CD14-positive monocyte (primary cell): ENCODE measurements at regions of chr6 and their contacts with region 1.

Region 1: GRCh38 chr6:27809939-27810767 is 102.0 kb downstream of the OR2B2 start:
- DNase-seq: peak; percentile 87 to 96 (median 91)
- H3K4me3 ChIP-seq: peak overlapping the region; percentile 62 to 87 (median 70)
- H3K4me3 Mint-ChIP-seq: peak overlapping the region; percentile 89 to 92
- H3K27ac ChIP-seq: peak overlapping the region; percentile 80 to 92
- H3K27ac Mint-ChIP-seq: peak overlapping the region; percentile 88 to 97 (median 94)
- H3K4me1 ChIP-seq: peaks cover 41 to 48% of the 10 kb centered on the region in 2 donors
- H3K4me1 Mint-ChIP-seq: peaks cover 49% of the 10 kb centered on the region
- H3K27me3 ChIP-seq: no peaks in the 10 kb centered on the region
- H3K27me3 Mint-ChIP-seq: peaks cover 0 to 4% (median 0%) of the 10 kb centered on the region in 3 donors
- CTCF ChIP-seq: no peak

Region 2: GRCh38 chr6:27772261-27773001 is 37.7 kb before region 1 on chr6:
- intact Hi-C with region 1: no loop called
- DNase-seq: peak; percentile 71 to 80 (median 79)
- H3K4me3 ChIP-seq: no peak overlapping the region
- H3K4me3 Mint-ChIP-seq: peak overlapping the region in 1 of 2 donors; percentile 39
- H3K27ac ChIP-seq: no peak overlapping the region
- H3K27ac Mint-ChIP-seq: peak overlapping the region in 5 of 7 donors; percentile 46 to 87 (median 76)
- H3K4me1 ChIP-seq: peaks cover 32 to 33% of the 10 kb centered on the region in 2 donors
- H3K4me1 Mint-ChIP-seq: peaks cover 35% of the 10 kb centered on the region
- H3K27me3 ChIP-seq: no peaks in the 10 kb centered on the region
- H3K27me3 Mint-ChIP-seq: peaks cover 0 to 2% (median 0%) of the 10 kb centered on the region in 3 donors
- CTCF ChIP-seq: peak; percentile 93

Region 3: GRCh38 chr6:27871924-27872638 is 61.9 kb after region 1 on chr6:
- intact Hi-C with region 1: loop called in 1 of 2 experiments (anchors 5 kb)
- DNase-seq: peak; percentile 93 to 94 (median 94)
- H3K4me3 ChIP-seq: peak overlapping the region; percentile 86 to 98 (median 95)
- H3K4me3 Mint-ChIP-seq: peak overlapping the region; percentile 94 to 98
- H3K27ac ChIP-seq: peak overlapping the region; percentile 54 to 95
- H3K27ac Mint-ChIP-seq: peak overlapping the region; percentile 92 to 96 (median 96)
- H3K4me1 ChIP-seq: peaks cover 29 to 43% of the 10 kb centered on the region in 2 donors
- H3K4me1 Mint-ChIP-seq: peaks cover 39% of the 10 kb centered on the region
- H3K27me3 ChIP-seq: no peaks in the 10 kb centered on the region
- H3K27me3 Mint-ChIP-seq: peaks cover 0 to 2% (median 0%) of the 10 kb centered on the region in 3 donors
- CTCF ChIP-seq: peak; percentile 36

Region 4: GRCh38 chr6:27882624-27883023 is 72.5 kb after region 1 on chr6:
- intact Hi-C with region 1: no loop called
- DNase-seq: no peak
- H3K4me3 ChIP-seq: no peak overlapping the region
- H3K4me3 Mint-ChIP-seq: no peak overlapping the region
- H3K27ac ChIP-seq: no peak overlapping the region
- H3K27ac Mint-ChIP-seq: no peak overlapping the region
- H3K4me1 ChIP-seq: no peaks in the 10 kb centered on the region
- H3K4me1 Mint-ChIP-seq: peaks cover 15% of the 10 kb centered on the region
- H3K27me3 ChIP-seq: no peaks in the 10 kb centered on the region
- H3K27me3 Mint-ChIP-seq: peaks cover 0 to 5% (median 5%) of the 10 kb centered on the region in 3 donors
- CTCF ChIP-seq: no peak

Region 5: GRCh38 chr6:27957516-27957915 is 147.4 kb after region 1 on chr6:
- intact Hi-C with region 1: no loop called
- DNase-seq: no peak
- H3K4me3 ChIP-seq: no peak overlapping the region
- H3K4me3 Mint-ChIP-seq: no peak overlapping the region
- H3K27ac ChIP-seq: no peak overlapping the region
- H3K27ac Mint-ChIP-seq: no peak overlapping the region
- H3K4me1 ChIP-seq: no peaks in the 10 kb centered on the region
- H3K4me1 Mint-ChIP-seq: no peaks in the 10 kb centered on the region
- H3K27me3 ChIP-seq: peaks cover 0 to 2% of the 10 kb centered on the region in 2 donors
- H3K27me3 Mint-ChIP-seq: peaks cover 0 to 13% (median 3%) of the 10 kb centered on the region in 3 donors
- CTCF ChIP-seq: no peak